ENCODE measurements at regions of chr1 and their contacts with region 1.

Region 1: GRCh38 chr1:150995896-150996295 is 10.8 kb downstream of the MINDY1 start:
- DNase-seq: peak in 1 of 2 experiments; percentile 81
- H3K4me3 ChIP-seq: no peak overlapping the region
- H3K27ac ChIP-seq: 0 out of 2 replicates have a peak overlapping the region, but pooled peaks have one; percentile 51
- H3K4me1 ChIP-seq: peaks cover 0 to 4% (median 0%) of the 10 kb centered on the region in 4 experiments; a peak in 1 of 7 replicates
- H3K27me3 ChIP-seq: no peaks in the 10 kb centered on the region
- CTCF ChIP-seq: peak; percentile 44 to 71 (median 62)
- EP300 ChIP-seq: no peak
- POLR2A ChIP-seq: no peak
- RAD21 ChIP-seq: peak; percentile 73 to 76

Region 2: DNA sequence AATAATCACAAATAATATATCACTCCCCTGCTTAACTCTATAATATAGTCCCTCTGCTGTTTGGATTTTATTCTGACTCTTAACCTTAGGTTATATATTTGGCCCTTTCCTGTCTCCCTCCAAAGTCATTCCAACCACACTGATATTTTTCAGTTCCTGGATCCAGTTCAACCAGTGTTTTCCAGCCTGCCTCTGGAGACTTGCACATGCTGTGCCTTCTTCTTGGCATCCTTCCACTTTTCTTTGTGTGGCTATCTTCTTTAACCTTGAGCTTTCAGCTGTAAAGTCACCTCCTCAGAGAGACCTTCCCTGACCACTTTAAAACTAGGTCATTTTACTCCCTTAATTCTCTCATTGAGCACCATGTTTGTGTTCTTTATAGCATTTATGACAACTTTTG is 40.6 kb before region 1 on chr1:
- CTCF ChIA-PET with region 1: interaction called, 25 read pairs
- POLR2A ChIA-PET with region 1: interaction called, 3 read pairs
- DNase-seq: no peak
- H3K4me3 ChIP-seq: no peak overlapping the region
- H3K27ac ChIP-seq: no peak overlapping the region
- H3K4me1 ChIP-seq: no peaks in the 10 kb centered on the region
- H3K27me3 ChIP-seq: no peaks in the 10 kb centered on the region
- CTCF ChIP-seq: no peak
- EP300 ChIP-seq: no peak
- POLR2A ChIP-seq: no peak
- RAD21 ChIP-seq: no peak

Region 3: GRCh38 chr1:150961799-150962198 is 34.1 kb before region 1 on chr1:
- CTCF ChIA-PET with region 1: interaction called, 25 read pairs
- POLR2A ChIA-PET with region 1: interaction called, 5 read pairs
- DNase-seq: no peak
- H3K4me3 ChIP-seq: no peak overlapping the region
- H3K27ac ChIP-seq: no peak overlapping the region
- H3K4me1 ChIP-seq: no peaks in the 10 kb centered on the region
- H3K27me3 ChIP-seq: no peaks in the 10 kb centered on the region
- CTCF ChIP-seq: no peak
- EP300 ChIP-seq: no peak
- POLR2A ChIP-seq: no peak
- RAD21 ChIP-seq: no peak

Region 4: GRCh38 chr1:150970808-150971592 is 24.9 kb before region 1 on chr1:
- CTCF ChIA-PET with region 1: interaction called, 183 read pairs
- POLR2A ChIA-PET with region 1: interaction called, 11 read pairs
- DNase-seq: no peak
- H3K4me3 ChIP-seq: peak overlapping the region in 1 of 4 experiments; percentile 91; a peak in 3 of 8 replicates
- H3K27ac ChIP-seq: no peak overlapping the region
- H3K4me1 ChIP-seq: peaks cover 15 to 36% (median 24%) of the 10 kb centered on the region in 4 experiments
- H3K27me3 ChIP-seq: no peaks in the 10 kb centered on the region
- CTCF ChIP-seq: no peak
- EP300 ChIP-seq: no peak
- POLR2A ChIP-seq: no peak
- RAD21 ChIP-seq: no peak

Region 5: DNA sequence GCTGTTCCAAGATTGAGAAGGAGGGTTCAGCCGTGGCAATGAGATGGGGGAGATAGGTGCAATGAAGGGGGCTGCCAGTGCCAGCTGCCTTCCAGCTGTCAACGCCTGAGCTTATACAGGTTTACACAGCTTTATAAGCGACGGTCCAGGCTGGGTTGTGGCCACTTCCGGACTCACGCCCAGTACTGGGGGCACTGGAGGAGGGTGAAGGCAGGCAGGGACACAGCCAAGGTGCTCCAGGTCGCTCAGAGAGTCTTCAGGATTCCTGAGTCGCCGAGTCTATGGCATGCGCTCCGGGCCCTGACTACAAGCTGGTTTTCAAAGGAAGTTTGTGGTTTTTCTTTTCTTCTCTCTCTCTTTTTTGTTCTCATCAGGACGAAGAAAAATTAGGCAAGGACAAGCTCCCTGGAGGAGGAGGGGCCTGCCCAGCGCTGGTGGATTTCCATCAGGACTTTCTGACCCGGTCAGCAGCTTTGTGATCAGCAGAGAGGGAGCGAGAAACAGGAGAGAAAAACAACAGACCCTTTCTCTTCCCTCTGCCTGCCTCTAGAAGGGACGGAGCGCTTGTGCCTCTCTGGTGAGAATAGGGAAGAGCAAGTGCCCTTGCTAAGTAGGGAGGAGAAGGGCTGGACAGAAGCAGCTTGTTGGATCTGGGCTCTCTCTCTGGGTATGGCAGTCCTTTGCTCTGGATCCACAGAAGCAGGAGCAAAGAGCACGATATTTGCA is 10.6 kb after region 1 on chr1 and contains the start of gene MINDY1:
- CTCF ChIA-PET with region 1: interaction called, 85 read pairs
- POLR2A ChIA-PET with region 1: interaction called, 18 read pairs
- DNase-seq: peak; percentile 33 to 67
- H3K4me3 ChIP-seq: peak within 1 kb of the TSS; percentile 6 to 94 (median 41); a peak in 7 of 8 replicates
- H3K27ac ChIP-seq: peak within 1 kb of the TSS; percentile 53
- H3K4me1 ChIP-seq: peaks cover 9 to 12% (median 9%) of the 10 kb centered on the region in 4 experiments; a peak in 6 of 7 replicates
- H3K27me3 ChIP-seq: no peaks in the 10 kb centered on the region
- CTCF ChIP-seq: peak; percentile 53 to 70 (median 62)
- EP300 ChIP-seq: no peak
- POLR2A ChIP-seq: peak; percentile 43 to 84
- RAD21 ChIP-seq: peak; percentile 59 to 66
- total RNA-seq, gene MINDY1: 10.6 and 11.4 TPM in 2 replicates

Measured in H1 (cell line).